ENCODE measurements at regions of chr7 and their contacts with region 1.

Region 1: DNA sequence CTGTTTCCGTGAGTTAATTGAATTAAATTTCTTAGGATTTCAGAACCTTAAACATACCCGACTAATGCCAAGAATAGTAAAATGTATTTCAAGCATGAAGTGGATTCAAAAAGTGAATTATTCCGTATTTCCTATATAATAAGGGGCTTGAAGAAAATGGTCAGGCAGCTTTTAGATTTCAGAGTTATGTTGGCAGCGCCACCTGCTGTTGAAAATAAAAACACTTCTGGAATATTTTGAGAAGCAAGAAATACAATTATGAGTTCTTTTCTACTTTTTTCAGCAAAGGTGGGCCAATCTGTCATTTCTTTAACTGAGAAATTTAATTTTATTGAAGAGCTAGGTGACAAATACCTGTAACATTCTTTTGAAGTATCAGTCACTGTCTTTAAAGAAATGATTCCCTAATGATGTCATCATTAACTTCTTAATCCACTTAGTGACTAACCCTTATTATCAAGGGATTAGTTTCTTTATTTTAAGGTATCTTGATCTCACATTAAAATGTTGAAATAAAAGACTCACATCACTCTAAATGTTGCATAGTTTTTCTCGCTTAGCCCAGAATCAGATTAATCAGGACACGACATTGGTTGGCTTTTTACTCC is 36.6 kb upstream of the AGR3 start:
- DNase-seq: no peak
- H3K4me3 ChIP-seq: no peak overlapping the region
- H3K27ac ChIP-seq: no peak overlapping the region
- H3K4me1 ChIP-seq: no peaks in the 10 kb centered on the region
- H3K27me3 ChIP-seq: no peaks in the 10 kb centered on the region
- CTCF ChIP-seq: peak; percentile 38 to 75 (median 64)

Region 2: GRCh38 chr7:16695621-16696237 is 222.7 kb before region 1 on chr7:
- intact Hi-C with region 1: loop called (anchors 2 kb)
- DNase-seq: no peak
- H3K4me3 ChIP-seq: no peak overlapping the region
- H3K27ac ChIP-seq: no peak overlapping the region
- H3K4me1 ChIP-seq: peaks cover 0 to 3% of the 10 kb centered on the region in 2 donors
- H3K27me3 ChIP-seq: no peaks in the 10 kb centered on the region
- CTCF ChIP-seq: peak; percentile 37 to 55 (median 44)

Region 3: DNA sequence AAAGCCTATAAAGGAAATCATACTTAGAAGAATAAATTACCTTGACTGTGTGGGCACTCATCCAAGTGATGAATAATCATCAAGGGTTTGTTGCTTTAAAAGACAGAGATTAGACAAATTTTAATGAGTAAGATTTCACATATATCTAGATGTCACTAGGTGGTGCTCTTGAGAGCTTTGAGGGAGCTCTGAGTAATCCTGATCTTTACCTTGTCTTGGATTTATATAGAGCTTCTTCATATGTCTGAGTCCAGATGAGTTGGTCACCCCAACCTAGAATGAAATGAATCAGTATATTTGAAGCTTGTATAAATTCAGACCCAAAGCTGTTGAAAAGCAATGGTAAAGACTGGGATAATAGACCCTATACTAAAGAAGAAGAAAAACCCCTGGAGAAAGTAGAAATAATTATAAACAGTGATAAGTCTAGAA is 117.3 kb before region 1 on chr7:
- intact Hi-C with region 1: loop called (anchors 1 kb)
- DNase-seq: no peak
- H3K4me3 ChIP-seq: no peak overlapping the region
- H3K27ac ChIP-seq: no peak overlapping the region
- H3K4me1 ChIP-seq: no peaks in the 10 kb centered on the region
- H3K27me3 ChIP-seq: no peaks in the 10 kb centered on the region
- CTCF ChIP-seq: peak; percentile 6 to 52 (median 25)